ENCODE measurements at regions of chr10 and their contacts with region 1.

Region 1: GRCh38 chr10:7260412-7260900 is 150.4 kb downstream of the SFMBT2 start:
- DNase-seq: peak; percentile 76
- ATAC-seq: peak; percentile 93 to 96

Region 2: GRCh38 chr10:6635784-6636183 is 624.7 kb before region 1 on chr10:
- intact Hi-C with region 1: no loop called
- DNase-seq: no peak
- ATAC-seq: no peak

Region 3: GRCh38 chr10:7337431-7338171 is 77.1 kb after region 1 on chr10:
- intact Hi-C with region 1: loop called in 1 of 2 experiments (anchors 5 kb)
- DNase-seq: no peak
- ATAC-seq: no peak

Measured in left cardiac atrium (tissue), 4 donors.